ENCODE measurements at regions of chr19 and their contacts with region 1.

Region 1: DNA sequence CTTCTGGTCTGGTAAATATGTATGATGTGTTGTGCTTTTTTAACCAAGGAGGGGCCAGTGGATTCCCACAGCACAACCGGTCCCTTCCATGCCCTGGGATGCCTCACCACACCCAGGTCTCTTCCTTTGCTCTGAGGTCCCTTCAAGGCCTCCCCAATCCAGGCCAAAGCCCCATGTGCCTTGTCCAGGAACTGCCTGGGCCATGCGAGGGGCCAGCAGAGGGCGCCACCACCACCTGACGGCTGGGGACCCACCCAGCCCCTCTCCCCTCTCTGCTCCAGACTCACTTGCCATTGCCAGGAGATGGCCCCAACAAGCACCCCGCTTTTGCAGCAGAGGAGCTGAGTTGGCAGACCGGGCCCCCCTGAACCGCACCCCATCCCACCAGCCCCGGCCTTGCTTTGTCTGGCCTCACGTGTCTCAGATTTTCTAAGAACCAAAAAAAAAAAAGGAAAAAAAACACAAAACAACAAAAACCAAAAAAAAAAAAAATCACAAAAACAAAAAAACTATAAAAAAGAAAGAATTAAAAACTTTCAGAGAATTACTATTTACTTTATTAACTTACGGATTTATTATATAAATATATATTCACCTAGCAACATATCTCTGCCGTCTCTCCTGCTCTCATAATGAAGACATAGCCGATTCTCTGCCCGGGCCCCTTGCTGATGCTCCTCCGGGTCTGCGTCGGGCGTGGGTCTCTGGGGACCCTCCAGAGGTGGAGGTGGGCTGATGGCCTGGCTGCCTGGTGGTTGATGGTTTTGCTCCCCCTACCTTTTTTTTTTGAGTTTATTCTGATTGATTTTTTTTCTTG is 14.4 kb downstream of the CAPN12 start:
- DNase-seq: no peak
- ATAC-seq: peak; percentile 92
- H3K4me3 ChIP-seq: no peak overlapping the region
- H3K27ac ChIP-seq: no peak overlapping the region
- H3K4me1 ChIP-seq: peaks cover 15% of the 10 kb centered on the region
- H3K27me3 ChIP-seq: no peaks in the 10 kb centered on the region
- CTCF ChIP-seq: peak; percentile 71 to 97 (median 79)
- EP300 ChIP-seq: no peak
- POLR2A ChIP-seq: no peak
- RAD21 ChIP-seq: peak; percentile 67

Region 2: DNA sequence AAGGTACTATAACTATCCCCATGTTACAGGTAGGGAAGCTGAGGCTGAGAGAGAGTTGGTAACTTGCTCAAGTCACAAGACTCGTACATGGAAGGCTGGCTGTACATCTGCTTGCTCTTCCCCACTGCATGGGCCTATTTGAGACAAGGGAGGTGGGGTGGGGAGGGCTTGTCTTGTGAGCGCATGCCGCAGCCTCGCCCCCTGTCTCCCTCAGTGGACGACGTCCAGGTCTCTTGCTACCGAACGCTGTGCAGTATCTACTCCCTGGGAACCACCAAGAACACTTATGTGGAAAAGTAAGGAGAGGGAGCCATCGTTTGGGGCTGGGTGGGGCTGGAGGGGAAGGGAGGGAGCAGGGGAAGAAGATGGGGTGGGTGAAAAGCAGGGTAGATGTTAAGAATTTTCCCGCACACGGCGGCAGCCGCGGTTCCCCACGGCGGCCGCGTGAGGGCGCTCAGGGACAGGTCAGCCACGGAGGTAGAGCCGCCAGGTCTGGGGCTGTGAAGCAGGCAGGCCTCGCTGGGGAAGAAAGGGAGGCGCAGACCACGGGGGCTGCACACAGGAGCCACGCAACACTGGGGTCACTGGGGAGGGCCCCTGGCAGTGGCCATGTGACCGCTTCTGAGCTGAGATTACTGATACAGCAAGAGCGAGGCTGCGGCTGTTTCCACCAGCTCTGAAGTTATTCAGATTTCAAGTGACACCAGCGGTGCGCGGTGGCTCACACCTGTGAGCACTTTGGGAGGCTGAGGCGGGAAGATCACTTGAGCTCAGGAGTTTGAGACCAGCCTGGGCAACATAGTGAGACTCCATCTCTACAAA is 214.8 kb before region 1 on chr19:
- CTCF ChIA-PET with region 1: interaction called, 3 read pairs
- POLR2A ChIA-PET with region 1: no interaction called
- RAD21 ChIA-PET with region 1: no interaction called
- SMC1A ChIA-PET with region 1: no interaction called
- in situ Hi-C with region 1: no loop called
- intact Hi-C with region 1: loop called (anchors 10 kb)
- DNase-seq: no peak
- ATAC-seq: peak; percentile 96
- H3K4me3 ChIP-seq: no peak overlapping the region
- H3K27ac ChIP-seq: no peak overlapping the region
- H3K4me1 ChIP-seq: peaks cover 6% of the 10 kb centered on the region
- H3K27me3 ChIP-seq: no peaks in the 10 kb centered on the region
- CTCF ChIP-seq: peak; percentile 89 to 98 (median 90); a peak in 5 of 6 replicates
- EP300 ChIP-seq: no peak
- POLR2A ChIP-seq: no peak
- RAD21 ChIP-seq: peak; percentile 74

Region 3: GRCh38 chr19:38657633-38658222 is 72.1 kb before region 1 on chr19:
- CTCF ChIA-PET with region 1: no interaction called
- POLR2A ChIA-PET with region 1: no interaction called
- RAD21 ChIA-PET with region 1: no interaction called
- SMC1A ChIA-PET with region 1: no interaction called
- in situ Hi-C with region 1: no loop called
- intact Hi-C with region 1: no loop called
- DNase-seq: no peak
- ATAC-seq: peak; percentile 45
- H3K4me3 ChIP-seq: no peak overlapping the region
- H3K27ac ChIP-seq: no peak overlapping the region
- H3K4me1 ChIP-seq: peaks cover 29% of the 10 kb centered on the region
- H3K27me3 ChIP-seq: no peaks in the 10 kb centered on the region
- CTCF ChIP-seq: no peak
- EP300 ChIP-seq: no peak
- POLR2A ChIP-seq: no peak
- RAD21 ChIP-seq: no peak

Region 4: DNA sequence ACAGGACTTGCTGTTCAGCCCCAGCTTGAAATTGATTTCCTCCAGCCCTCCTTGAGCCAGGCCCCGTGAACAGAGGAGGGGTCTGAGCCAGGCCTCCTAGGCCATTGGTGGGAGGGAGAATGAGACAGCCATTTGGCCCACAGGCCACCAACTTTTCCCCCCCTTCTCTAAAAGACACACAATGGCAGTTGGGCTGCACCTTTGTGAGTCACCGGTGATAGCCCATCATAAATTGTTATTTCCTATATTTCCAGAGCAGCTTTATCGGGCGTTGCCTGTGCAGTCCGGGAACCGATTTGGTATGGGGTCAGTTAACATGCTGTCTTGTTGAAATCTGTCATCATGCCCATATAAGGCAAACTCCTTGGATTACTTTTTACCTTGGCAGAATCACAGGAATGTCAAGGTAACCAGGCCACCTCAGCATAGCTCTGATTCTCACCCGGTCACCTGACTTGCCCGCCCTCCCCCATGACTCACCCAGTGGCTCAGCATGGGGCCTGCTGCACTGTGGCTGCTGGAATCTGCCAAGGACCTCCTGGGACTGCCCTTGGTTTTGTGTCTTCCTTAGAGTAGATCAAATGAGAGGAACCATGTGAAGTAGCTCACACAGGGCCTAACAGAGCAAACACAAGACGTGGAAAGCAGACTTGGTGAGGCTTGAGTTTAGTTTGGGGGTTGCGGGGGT is 46.3 kb before region 1 on chr19:
- CTCF ChIA-PET with region 1: no interaction called
- POLR2A ChIA-PET with region 1: no interaction called
- RAD21 ChIA-PET with region 1: no interaction called
- SMC1A ChIA-PET with region 1: no interaction called
- in situ Hi-C with region 1: no loop called
- intact Hi-C with region 1: no loop called
- DNase-seq: no peak
- ATAC-seq: peak; percentile 55
- H3K4me3 ChIP-seq: no peak overlapping the region
- H3K27ac ChIP-seq: peak overlapping the region; percentile 70
- H3K4me1 ChIP-seq: peaks cover 54% of the 10 kb centered on the region
- H3K27me3 ChIP-seq: no peaks in the 10 kb centered on the region
- CTCF ChIP-seq: no peak
- EP300 ChIP-seq: no peak
- POLR2A ChIP-seq: no peak
- RAD21 ChIP-seq: no peak

Measured in GM12878 (cell line).